ENCODE measurements at regions of chr3 and their contacts with region 1.

Region 1: GRCh38 chr3:123036352-123037014 is 8.9 kb upstream of the SEMA5B start:
- DNase-seq: no peak
- H3K4me3 ChIP-seq: no peak overlapping the region
- CTCF ChIP-seq: no peak
- POLR2A ChIP-seq: no peak

Region 2: GRCh38 chr3:122754929-122755328 is 281.6 kb before region 1 on chr3:
- intact Hi-C with region 1: loop called (anchors 10 kb)
- DNase-seq: no peak
- H3K4me3 ChIP-seq: no peak overlapping the region
- CTCF ChIP-seq: no peak
- POLR2A ChIP-seq: no peak

Region 3: GRCh38 chr3:123712077-123712860 is 675.8 kb after region 1 on chr3:
- intact Hi-C with region 1: no loop called
- DNase-seq: no peak
- H3K4me3 ChIP-seq: no peak overlapping the region
- CTCF ChIP-seq: no peak
- POLR2A ChIP-seq: no peak